ENCODE measurements at regions of chr6 and their contacts with region 1.

Region 1: GRCh38 chr6:37169496-37170272 is at the start of gene PIM1:
- DNase-seq: peak; percentile 97
- H3K4me3 ChIP-seq: peak within 1 kb of the TSS; percentile 96
- H3K27ac ChIP-seq: peak within 1 kb of the TSS; percentile 71
- H3K4me1 ChIP-seq: peaks cover 19% of the 10 kb centered on the region
- CTCF ChIP-seq: no peak
- total RNA-seq, gene PIM1: 27.4 and 31.4 TPM in 2 replicates

Region 2: GRCh38 chr6:36765594-36766398 is 403.9 kb before region 1 on chr6:
- CTCF ChIA-PET with region 1: no interaction called
- POLR2A ChIA-PET with region 1: no interaction called
- intact Hi-C with region 1: loop called (anchors 10 kb)
- DNase-seq: peak; percentile 91
- H3K4me3 ChIP-seq: peak overlapping the region; percentile 2
- H3K27ac ChIP-seq: peak overlapping the region; percentile 4
- H3K4me1 ChIP-seq: peaks cover 45% of the 10 kb centered on the region
- CTCF ChIP-seq: peak; percentile 99

Region 3: DNA sequence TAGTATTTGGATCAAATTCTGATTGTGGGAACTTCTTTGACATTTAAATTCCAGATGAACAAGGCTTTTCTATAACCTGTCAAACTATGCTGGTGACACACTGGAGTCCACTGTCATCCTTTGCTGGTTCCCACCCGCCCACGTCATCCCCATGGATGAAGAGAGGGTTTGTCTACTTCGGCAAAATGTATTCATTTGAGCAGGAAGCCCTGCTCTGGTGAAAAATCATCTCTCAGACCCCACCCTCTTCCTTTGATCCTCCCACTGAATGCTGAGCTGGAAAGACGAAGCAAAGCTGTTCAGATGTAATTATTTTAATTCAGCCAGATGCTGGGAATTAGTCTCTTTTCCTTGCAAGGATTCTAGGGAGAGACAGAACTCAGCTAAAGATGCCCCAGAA is 380.9 kb before region 1 on chr6:
- CTCF ChIA-PET with region 1: no interaction called
- POLR2A ChIA-PET with region 1: no interaction called
- intact Hi-C with region 1: no loop called
- DNase-seq: no peak
- H3K4me3 ChIP-seq: no peak overlapping the region
- H3K27ac ChIP-seq: no peak overlapping the region
- H3K4me1 ChIP-seq: peaks cover 3% of the 10 kb centered on the region
- CTCF ChIP-seq: no peak

Region 4: GRCh38 chr6:36963451-36964290 is 206.0 kb before region 1 on chr6:
- CTCF ChIA-PET with region 1: no interaction called
- POLR2A ChIA-PET with region 1: no interaction called
- intact Hi-C with region 1: no loop called
- DNase-seq: peak; percentile 78
- H3K4me3 ChIP-seq: peak overlapping the region; percentile 40
- H3K27ac ChIP-seq: no peak overlapping the region
- H3K4me1 ChIP-seq: peaks cover 26% of the 10 kb centered on the region
- CTCF ChIP-seq: 0 out of 2 replicates have a peak, but pooled peaks have one; percentile 1

Region 5: DNA sequence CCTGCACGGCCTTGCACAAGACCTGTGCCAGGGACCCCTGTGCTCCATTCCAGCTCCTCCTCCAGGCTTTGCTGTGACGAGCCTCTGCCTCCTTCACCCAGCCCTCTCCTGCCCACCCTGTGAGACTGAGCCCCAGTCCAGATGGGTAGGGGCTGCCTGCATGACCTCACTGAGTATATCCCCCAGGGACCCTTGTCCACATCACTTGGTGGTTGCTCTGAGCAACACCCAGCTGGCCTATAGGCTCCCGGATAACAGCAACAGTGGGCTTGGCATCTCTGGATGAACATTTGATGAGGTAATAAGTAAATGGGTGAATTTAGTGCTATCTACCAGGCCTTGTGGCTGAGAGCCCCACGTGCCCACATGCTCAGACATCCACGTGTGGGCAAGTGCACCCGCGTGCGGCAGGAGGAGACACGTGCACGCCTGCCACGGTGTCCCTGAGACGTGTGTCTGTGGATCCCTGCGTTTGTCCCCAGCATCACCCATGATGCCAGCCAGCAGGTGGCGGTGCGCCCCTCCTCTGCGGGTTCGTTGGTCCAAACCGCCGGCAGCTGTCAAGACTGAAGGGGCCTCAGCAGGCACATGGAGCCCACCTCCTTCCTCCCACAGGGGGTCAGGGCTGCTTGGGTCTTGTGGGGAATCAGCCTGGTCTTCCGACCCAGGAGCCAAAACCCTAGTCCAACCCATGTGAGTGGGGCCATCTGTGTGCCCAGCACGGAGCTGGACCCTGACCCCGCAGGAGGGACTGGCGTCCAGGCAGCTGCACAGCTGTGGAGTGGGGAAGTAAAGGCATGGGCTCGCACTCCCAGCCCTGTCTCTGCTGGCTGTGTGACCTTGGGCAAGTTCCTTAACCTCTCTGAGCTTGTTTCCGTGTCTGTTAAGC is 118.3 kb before region 1 on chr6:
- CTCF ChIA-PET with region 1: interaction called, 13 read pairs
- POLR2A ChIA-PET with region 1: interaction called, 40 read pairs
- intact Hi-C with region 1: loop called (anchors 1 kb)
- DNase-seq: peak; percentile 92
- H3K4me3 ChIP-seq: no peak overlapping the region
- H3K27ac ChIP-seq: no peak overlapping the region
- H3K4me1 ChIP-seq: peaks cover 41% of the 10 kb centered on the region
- CTCF ChIP-seq: peak; percentile 94

Region 6: GRCh38 chr6:37155394-37156312 is 14.0 kb before region 1 on chr6:
- CTCF ChIA-PET with region 1: interaction called, 5 read pairs
- POLR2A ChIA-PET with region 1: interaction called, 12 read pairs
- intact Hi-C with region 1: loop called (anchors 1 kb)
- DNase-seq: peak; percentile 97
- H3K4me3 ChIP-seq: peak overlapping the region; percentile 58
- H3K27ac ChIP-seq: peak overlapping the region; percentile 93
- H3K4me1 ChIP-seq: peaks cover 46% of the 10 kb centered on the region
- CTCF ChIP-seq: no peak

Region 7: DNA sequence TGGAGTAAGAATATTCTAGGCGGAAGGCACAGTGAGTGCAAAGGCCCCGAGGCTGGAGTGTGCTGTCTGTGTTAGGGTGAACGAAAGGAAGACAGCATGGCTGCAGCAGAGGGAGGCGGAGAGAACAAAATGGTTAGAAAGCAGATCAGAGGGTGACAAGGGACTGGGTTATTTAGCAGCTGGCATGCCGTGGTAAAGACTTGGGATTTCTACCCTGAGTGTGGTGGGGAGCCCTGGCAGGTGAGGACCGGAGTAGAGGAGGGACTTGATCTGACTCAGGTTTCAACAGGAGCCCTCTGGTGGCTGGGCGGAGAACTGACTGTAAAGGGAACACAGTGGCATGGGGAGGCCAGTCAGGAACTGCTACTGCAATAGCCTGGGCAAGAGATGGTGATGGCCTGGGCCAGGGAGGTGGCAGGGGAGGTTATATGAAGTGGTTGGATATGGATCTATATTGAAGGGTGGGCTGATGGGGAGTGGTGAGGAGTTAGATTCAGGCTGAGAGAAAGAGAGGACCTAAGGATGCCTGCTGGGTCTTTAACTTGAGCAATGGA is 38.3 kb after region 1 on chr6:
- CTCF ChIA-PET with region 1: no interaction called
- POLR2A ChIA-PET with region 1: no interaction called
- intact Hi-C with region 1: loop called (anchors 1 kb)
- DNase-seq: peak; percentile 81
- H3K4me3 ChIP-seq: no peak overlapping the region
- H3K27ac ChIP-seq: no peak overlapping the region
- H3K4me1 ChIP-seq: no peaks in the 10 kb centered on the region
- CTCF ChIP-seq: peak; percentile 88

Measured in OCI-LY7 (cell line).